Posterior vena cava (tissue), 2 donors: ENCODE measurements at regions of chr16 and their contacts with region 1.

Region 1: DNA sequence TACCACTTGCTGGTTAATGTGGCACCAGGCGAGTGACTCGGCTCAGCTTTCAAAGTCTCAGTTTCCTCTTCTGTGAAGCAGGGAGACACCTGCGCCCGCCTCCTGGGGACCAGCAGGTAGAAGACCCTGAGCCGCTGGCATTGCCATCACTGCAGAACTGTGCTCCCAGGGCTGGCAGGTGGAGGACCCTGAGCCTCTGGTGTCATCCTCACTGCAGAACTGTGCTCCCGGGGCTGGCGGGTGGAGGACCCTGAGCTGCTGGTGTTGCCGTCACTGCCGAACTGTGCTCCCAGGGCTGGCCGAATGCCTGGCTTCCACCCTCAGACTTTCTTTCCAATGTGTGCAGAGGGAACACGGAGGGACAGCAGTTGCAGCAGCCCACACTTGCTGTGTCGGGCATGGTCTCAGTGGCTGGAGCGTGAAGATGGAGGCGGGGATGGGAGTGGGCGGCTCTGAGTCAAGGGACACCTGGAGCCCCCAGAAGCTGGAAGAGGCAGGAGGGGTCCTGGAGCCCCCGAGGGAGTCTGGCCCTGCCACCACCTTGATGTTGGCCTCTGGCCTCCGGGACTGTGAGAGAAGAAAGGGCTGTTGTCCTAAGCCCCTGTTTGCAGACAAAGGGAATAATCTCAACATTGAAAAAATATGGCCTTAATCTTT is 75.8 kb upstream of the METTL9 start:
- DNase-seq: no peak

Region 2: GRCh38 chr16:21971856-21972255 is 448.3 kb after region 1 on chr16:
- intact Hi-C with region 1: no loop called
- DNase-seq: no peak

Region 3: DNA sequence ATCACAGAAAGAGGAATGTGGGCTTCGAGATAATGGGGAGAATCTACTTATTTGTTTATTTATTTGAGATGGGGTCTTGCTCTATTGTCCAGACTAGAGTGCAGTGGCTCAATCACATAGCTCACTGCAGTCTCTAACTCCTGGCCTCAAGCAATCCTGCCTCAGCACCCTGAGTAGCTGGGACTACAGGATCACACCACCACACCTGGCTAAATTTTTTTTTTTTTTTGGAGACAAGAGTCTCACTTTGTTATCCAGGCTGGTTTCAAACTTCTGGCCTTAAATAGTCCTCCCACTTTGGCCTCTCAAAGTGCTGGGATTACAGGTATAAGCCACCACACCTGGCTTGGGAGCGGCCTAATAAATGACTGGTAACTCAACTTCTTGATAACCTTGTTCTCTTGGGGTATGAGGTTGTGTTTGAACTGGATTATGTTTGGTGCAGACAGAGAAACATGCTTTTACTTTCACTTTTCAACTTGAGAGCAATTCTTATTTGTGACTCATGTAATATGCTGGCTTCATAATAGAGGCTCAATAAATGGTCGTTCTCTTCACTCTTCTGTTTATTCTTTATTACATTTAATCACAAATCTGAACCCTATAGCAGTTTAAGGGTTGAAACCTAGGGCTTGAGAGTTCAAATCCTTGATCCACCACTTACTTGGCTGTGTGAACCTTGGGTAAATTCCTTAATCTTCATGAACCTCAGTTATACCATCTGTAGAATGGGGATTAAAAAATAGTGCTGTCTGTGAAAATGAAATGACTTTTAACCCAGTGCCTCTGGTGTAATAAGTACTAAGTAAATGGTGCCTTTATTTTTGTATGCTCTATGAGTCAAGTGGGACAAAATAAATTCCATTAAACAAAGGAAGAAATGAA is 1161.3 kb after region 1 on chr16:
- intact Hi-C with region 1: loop called in 1 of 2 experiments (anchors 5 kb)
- DNase-seq: no peak